ENCODE measurements at regions of chrX and their contacts with region 1.

Region 1: DNA sequence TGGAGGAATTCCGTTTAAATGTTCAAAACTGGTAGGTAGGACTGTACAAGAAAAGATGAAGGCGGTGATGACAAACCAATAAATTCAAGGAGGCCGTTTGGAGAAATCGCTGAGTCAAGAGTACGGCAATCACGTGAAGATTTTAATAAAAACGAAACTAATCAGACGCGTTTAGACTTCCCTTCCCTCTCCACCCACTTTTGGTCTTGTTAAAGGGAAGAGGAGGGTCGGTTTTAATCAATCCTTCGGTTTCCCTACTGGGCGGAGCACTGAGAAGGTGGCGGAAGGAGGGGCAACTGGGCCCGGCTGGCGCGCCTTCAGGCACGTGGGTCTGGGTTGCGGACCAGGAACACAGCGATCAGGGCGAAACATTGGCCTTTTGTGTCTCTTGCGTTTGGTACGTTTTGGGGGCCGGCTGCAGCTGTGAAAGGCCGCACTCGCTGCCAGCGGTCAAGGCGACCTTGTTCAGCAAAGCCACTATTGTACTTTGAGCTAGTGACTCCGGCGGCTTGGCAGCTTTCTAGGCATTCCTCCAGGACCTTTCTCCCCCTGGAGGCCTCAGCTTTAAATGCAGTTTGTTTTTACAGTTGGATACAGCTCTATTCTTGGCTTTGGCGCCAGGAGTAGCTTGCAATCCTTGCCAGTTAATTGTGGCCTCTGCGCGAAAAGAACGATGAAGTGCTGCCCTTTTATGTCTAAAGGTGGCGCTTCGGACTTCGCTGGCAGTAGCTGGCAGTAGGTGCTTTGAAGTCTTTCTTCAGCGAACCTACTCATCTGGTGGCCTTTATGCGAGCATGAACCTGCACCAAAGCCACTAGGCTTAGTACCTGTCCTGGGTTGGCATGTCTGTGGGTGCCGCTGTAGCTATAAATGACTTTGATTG is 16.8 kb upstream of the LAMP2 start:
- DNase-seq: peak; percentile 45
- ATAC-seq: peak; percentile 93
- H3K4me3 ChIP-seq: peak overlapping the region; percentile 57; the same call in 1 of the 2 replicates
- H3K27ac ChIP-seq: peak overlapping the region; percentile 47
- H3K4me1 ChIP-seq: no peaks in the 10 kb centered on the region
- H3K27me3 ChIP-seq: no peaks in the 10 kb centered on the region
- CTCF ChIP-seq: peak; percentile 37 to 49 (median 38)
- EP300 ChIP-seq: no peak; a peak in 1 of 4 replicates
- POLR2A ChIP-seq: no peak
- RAD21 ChIP-seq: peak; percentile 9; the same call in 1 of the 2 replicates

Region 2: DNA sequence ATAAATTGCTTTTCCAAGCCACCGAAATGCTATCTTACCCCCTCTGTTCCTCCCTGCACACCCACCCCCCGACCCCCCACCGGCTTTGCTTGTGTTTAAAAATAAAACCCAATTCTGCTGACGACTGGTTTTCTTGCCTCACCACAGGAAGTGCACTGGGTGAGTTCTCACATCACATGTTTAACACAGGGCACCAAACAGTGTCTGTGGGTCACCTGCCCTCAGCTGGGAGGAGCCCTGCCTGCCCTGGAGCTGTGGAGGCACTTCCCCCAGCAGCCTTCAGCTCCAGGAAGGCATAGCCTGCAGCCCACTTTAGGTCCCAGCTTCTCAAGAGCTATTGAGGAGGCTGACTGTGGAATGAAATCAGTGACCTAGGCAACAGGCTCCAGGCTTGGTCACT is 183.4 kb before region 1 on chrX:
- CTCF ChIA-PET with region 1: no interaction called
- POLR2A ChIA-PET with region 1: no interaction called
- RAD21 ChIA-PET with region 1: no interaction called
- SMC1A ChIA-PET with region 1: no interaction called
- in situ Hi-C with region 1: no loop called
- intact Hi-C with region 1: no loop called
- DNase-seq: peak; percentile 61
- ATAC-seq: peak; percentile 96
- H3K4me3 ChIP-seq: peak overlapping the region; percentile 30; the same call in 1 of the 2 replicates
- H3K27ac ChIP-seq: peak overlapping the region; percentile 62
- H3K4me1 ChIP-seq: peaks cover 13% of the 10 kb centered on the region
- H3K27me3 ChIP-seq: no peaks in the 10 kb centered on the region
- CTCF ChIP-seq: no peak
- EP300 ChIP-seq: 0 out of 4 replicates have a peak, but pooled peaks of 1 of the 2 experiments have one; percentile 29
- POLR2A ChIP-seq: 0 out of 2 replicates have a peak, but pooled peaks have one; percentile 32
- RAD21 ChIP-seq: no peak

Region 3: GRCh38 chrX:120468825-120469525 is 16.9 kb before region 1 on chrX and contains the start of gene LAMP2:
- CTCF ChIA-PET with region 1: interaction called, 6 read pairs
- POLR2A ChIA-PET with region 1: interaction called, 3 read pairs
- RAD21 ChIA-PET with region 1: interaction called, 5 read pairs
- SMC1A ChIA-PET with region 1: interaction called, 6 read pairs
- in situ Hi-C with region 1: no loop called
- intact Hi-C with region 1: loop called (anchors 1 kb)
- DNase-seq: peak; percentile 30
- ATAC-seq: peak; percentile 96
- H3K4me3 ChIP-seq: peak within 1 kb of the TSS; percentile 70
- H3K27ac ChIP-seq: peak within 1 kb of the TSS; percentile 68
- H3K4me1 ChIP-seq: no peaks in the 10 kb centered on the region
- H3K27me3 ChIP-seq: no peaks in the 10 kb centered on the region
- CTCF ChIP-seq: no peak
- EP300 ChIP-seq: no peak
- POLR2A ChIP-seq: peak; percentile 85
- RAD21 ChIP-seq: no peak
- polyA plus RNA-seq, gene LAMP2: 21.0 to 27.5 TPM

Measured in GM12878 (cell line).